ENCODE measurements at regions of chr5 and their contacts with region 1.

Region 1: DNA sequence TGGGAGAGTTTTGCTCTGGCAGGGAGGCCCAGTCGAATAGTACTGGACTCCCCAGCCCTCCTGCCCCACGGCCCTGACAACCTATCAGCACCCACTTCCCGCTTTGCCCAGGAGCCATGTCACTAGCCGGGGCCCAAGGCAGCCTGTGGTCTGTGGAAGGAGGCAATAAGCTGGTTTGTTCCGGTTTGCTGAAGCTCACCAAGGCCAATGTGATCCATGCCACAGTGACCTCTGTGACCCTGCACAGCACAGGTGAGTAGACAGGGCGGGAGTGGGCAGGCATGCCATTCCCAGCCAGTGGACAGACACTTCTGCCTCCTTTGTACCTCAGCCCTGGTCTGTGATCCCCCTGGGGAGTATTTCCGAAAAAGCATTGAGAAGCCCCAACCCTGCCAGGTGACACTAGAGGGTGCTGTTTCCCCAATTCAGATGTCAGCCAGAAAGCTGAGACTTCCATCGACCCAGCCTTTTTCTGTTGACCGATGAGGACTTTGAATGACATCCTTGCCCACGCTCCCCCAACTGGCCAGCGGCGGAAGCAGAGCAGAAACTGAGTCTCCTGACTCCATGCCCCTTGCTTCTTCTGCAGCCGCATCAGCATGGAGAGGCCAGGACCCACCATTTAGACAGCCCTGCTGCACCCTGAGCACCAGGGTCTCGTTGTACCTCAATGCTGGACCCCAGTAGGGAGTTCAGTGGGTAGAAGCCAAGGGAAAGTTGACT is 9.6 kb downstream of the PCYOX1L start:
- DNase-seq: peak; percentile 73
- ATAC-seq: peak; percentile 70
- H3K4me3 Mint-ChIP-seq: no peak overlapping the region
- H3K27ac Mint-ChIP-seq: no peak overlapping the region
- H3K4me1 Mint-ChIP-seq: peaks cover 5% of the 10 kb centered on the region
- H3K27me3 Mint-ChIP-seq: no peaks in the 10 kb centered on the region
- CTCF ChIP-seq: peak; percentile 74

Region 2: DNA sequence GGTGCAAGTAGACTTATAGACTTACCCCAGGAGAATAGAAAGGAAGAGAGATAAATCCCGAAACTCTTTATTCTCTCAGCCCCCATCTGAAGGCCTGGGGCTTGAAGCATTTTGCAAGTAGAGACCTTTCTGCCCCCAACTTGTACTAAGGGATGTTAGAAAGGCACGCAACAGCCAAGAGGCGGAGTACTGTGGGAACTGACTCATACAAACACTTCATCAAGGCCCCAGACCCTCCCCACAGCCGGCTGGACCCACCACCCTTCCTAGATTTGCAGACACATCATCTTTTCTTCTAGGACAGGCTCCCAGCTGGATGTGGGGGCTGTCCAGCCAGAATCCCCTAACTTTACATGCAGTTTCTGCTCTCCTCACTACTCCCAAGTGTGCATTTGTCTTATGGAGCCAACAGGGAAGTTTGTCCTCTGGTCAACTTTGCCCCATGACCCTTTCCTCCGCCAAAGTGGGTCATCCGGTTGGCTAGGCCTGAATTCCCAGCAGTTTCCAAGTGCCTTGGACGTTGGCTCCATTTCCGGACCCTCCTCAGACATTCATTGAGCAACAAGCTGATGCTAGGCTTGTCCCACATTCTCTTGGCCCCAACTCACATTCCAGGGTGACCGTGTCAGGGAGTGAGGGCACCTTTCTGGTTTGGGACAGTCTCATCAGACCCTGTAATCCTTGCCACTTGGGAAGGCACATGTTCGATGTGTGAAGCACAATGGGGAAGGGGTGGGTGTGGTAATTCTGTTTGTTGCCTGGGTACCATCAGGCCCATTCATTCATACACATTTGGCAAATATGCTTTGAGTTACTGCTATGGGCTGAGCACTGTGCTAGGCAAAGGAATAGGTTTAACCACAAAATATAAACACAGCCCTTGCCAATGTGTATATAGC is 161.5 kb before region 1 on chr5:
- CTCF ChIA-PET with region 1: no interaction called
- POLR2A ChIA-PET with region 1: no interaction called
- intact Hi-C with region 1: no loop called
- DNase-seq: no peak
- ATAC-seq: no peak
- H3K4me3 Mint-ChIP-seq: no peak overlapping the region
- H3K27ac Mint-ChIP-seq: no peak overlapping the region
- H3K4me1 Mint-ChIP-seq: no peaks in the 10 kb centered on the region
- H3K27me3 Mint-ChIP-seq: no peaks in the 10 kb centered on the region
- CTCF ChIP-seq: no peak

Region 3: DNA sequence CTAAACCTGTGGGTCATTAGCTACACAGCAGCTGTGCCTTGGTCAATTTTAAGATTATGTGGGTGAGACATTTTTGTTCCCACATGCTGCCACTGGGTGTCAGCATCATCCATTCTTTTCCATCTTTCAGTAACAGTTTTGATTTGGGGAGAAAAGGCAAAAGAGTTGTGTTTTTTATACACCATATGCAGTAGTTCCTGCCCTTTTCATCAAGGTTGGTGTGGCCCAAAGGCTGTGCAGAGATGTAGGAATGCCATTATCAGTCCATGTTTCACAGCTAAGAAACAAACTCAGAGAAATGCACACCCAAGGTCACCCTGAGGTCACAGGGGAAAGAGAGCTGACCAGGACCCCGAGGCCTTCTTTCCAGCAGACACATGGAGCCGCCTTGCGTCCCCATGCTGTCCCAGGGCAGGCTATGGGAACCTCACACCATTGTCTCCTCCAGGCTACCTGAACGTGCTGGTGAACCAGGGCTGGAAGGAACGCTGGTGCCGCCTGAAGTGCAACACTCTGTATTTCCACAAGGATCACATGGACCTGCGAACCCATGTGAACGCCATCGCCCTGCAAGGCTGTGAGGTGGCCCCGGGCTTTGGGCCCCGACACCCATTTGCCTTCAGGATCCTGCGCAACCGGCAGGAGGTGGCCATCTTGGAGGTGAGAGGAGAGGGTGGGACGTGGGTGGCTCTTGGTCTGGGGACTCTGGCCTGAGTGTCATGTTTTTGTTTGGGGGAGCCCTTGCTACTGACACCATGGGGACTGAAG is 49.9 kb before region 1 on chr5:
- CTCF ChIA-PET with region 1: interaction called, 145 read pairs
- POLR2A ChIA-PET with region 1: no interaction called
- intact Hi-C with region 1: loop called (anchors 2 kb)
- DNase-seq: peak; percentile 59
- ATAC-seq: peak; percentile 69
- H3K4me3 Mint-ChIP-seq: no peak overlapping the region
- H3K27ac Mint-ChIP-seq: no peak overlapping the region
- H3K4me1 Mint-ChIP-seq: no peaks in the 10 kb centered on the region
- H3K27me3 Mint-ChIP-seq: no peaks in the 10 kb centered on the region
- CTCF ChIP-seq: peak; percentile 72

Region 4: GRCh38 chr5:149345147-149345875 is 22.1 kb before region 1 on chr5 and contains the start of gene GRPEL2:
- CTCF ChIA-PET with region 1: interaction called, 22 read pairs
- POLR2A ChIA-PET with region 1: interaction called, 18 read pairs
- intact Hi-C with region 1: no loop called
- DNase-seq: peak; percentile 97
- ATAC-seq: peak; percentile 93
- H3K4me3 Mint-ChIP-seq: peak within 1 kb of the TSS; percentile 95
- H3K27ac Mint-ChIP-seq: peak within 1 kb of the TSS; percentile 98
- H3K4me1 Mint-ChIP-seq: peaks cover 51% of the 10 kb centered on the region
- H3K27me3 Mint-ChIP-seq: no peaks in the 10 kb centered on the region
- CTCF ChIP-seq: no peak
- total RNA-seq, gene GRPEL2: 31.0 to 31.1 TPM

Region 5: GRCh38 chr5:149387081-149387631 is 19.7 kb after region 1 on chr5:
- CTCF ChIA-PET with region 1: interaction called, 43 read pairs
- POLR2A ChIA-PET with region 1: no interaction called
- intact Hi-C with region 1: no loop called
- DNase-seq: no peak
- ATAC-seq: no peak
- H3K4me3 Mint-ChIP-seq: no peak overlapping the region
- H3K27ac Mint-ChIP-seq: no peak overlapping the region
- H3K4me1 Mint-ChIP-seq: no peaks in the 10 kb centered on the region
- H3K27me3 Mint-ChIP-seq: no peaks in the 10 kb centered on the region
- CTCF ChIP-seq: no peak